ENCODE measurements at regions of chr7 and their contacts with region 1.

Region 1: GRCh38 chr7:42237162-42237821 is at the start of gene GLI3:
- DNase-seq: peak; percentile 88
- ATAC-seq: peak; percentile 72
- H3K4me3 ChIP-seq: peak within 1 kb of the TSS; percentile 92
- H3K27ac ChIP-seq: peak within 1 kb of the TSS; percentile 65
- H3K4me1 ChIP-seq: peaks cover 39% of the 10 kb centered on the region
- H3K27me3 ChIP-seq: no peaks in the 10 kb centered on the region
- CTCF ChIP-seq: no peak
- total RNA-seq, gene GLI3: 3.5 and 9.6 TPM in 2 replicates

Region 2: GRCh38 chr7:42107484-42108245 is 129.6 kb before region 1 on chr7:
- CTCF ChIA-PET with region 1: no interaction called
- POLR2A ChIA-PET with region 1: no interaction called
- intact Hi-C with region 1: loop called (anchors 2 kb)
- DNase-seq: peak; percentile 88
- ATAC-seq: peak; percentile 49
- H3K4me3 ChIP-seq: peak overlapping the region; percentile 45
- H3K27ac ChIP-seq: peak overlapping the region; percentile 94
- H3K4me1 ChIP-seq: peaks cover 57% of the 10 kb centered on the region
- H3K27me3 ChIP-seq: no peaks in the 10 kb centered on the region
- CTCF ChIP-seq: no peak

Region 3: GRCh38 chr7:42283553-42283952 is 46.3 kb after region 1 on chr7:
- CTCF ChIA-PET with region 1: no interaction called
- POLR2A ChIA-PET with region 1: interaction called, 5 read pairs
- intact Hi-C with region 1: loop called (anchors 2 kb)
- DNase-seq: peak; percentile 90
- ATAC-seq: peak; percentile 85
- H3K4me3 ChIP-seq: no peak overlapping the region
- H3K27ac ChIP-seq: peak overlapping the region; percentile 61
- H3K4me1 ChIP-seq: peaks cover 35% of the 10 kb centered on the region
- H3K27me3 ChIP-seq: no peaks in the 10 kb centered on the region
- CTCF ChIP-seq: no peak

Region 4: DNA sequence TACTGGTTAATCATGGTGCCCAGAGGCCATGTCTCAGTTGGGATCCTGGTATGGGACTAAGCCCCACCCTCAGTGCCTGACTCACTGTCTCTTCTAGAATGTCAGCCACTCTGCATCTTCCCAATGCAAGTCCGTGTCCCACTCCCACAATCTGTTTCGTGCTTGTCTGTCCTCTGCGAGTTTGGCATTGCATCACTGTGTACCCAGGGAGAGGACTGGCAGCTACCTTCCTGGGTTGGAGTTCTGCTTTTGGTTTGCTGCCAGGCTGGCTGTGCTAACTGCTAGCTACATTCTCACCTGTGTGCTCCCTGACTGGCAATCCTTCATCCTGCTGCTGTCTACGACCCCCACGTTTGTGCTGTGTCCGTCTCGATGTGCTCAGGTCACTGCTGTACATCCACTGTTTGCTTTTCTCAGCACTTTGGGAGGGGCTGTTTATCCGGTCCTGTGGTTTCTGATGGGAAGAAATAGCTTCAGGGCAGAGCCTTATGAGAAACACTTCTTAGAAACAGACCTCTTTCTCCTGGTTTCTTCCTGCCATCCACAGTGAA is 55.8 kb after region 1 on chr7:
- CTCF ChIA-PET with region 1: no interaction called
- POLR2A ChIA-PET with region 1: no interaction called
- intact Hi-C with region 1: loop called (anchors 2 kb)
- DNase-seq: peak; percentile 89
- ATAC-seq: peak; percentile 94
- H3K4me3 ChIP-seq: peak overlapping the region; percentile 59
- H3K27ac ChIP-seq: peak overlapping the region; percentile 94
- H3K4me1 ChIP-seq: peaks cover 21% of the 10 kb centered on the region
- H3K27me3 ChIP-seq: no peaks in the 10 kb centered on the region
- CTCF ChIP-seq: no peak

Region 5: DNA sequence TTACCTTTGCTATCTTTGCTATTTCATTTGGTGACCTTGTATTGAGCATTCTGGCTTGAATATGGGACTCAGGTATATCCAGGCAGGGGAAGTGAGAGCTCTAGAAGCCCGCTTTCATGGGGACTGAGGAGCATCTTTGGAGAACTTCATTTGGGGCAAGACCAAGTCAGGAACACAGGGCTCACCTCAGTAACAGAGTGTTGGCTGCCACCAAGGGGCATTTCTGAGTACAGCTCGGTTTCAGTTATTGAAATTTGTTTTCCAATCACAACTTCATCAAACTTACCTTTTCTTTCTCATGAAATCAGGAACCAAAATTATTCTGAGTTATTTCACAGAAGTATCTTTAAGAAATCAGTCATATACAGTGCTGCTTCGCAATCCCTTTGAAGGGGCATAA is 337.4 kb after region 1 on chr7:
- CTCF ChIA-PET with region 1: no interaction called
- POLR2A ChIA-PET with region 1: no interaction called
- intact Hi-C with region 1: loop called (anchors 10 kb)
- DNase-seq: peak; percentile 34
- ATAC-seq: peak; percentile 80
- H3K4me3 ChIP-seq: no peak overlapping the region
- H3K27ac ChIP-seq: no peak overlapping the region
- H3K4me1 ChIP-seq: peaks cover 9% of the 10 kb centered on the region
- H3K27me3 ChIP-seq: no peaks in the 10 kb centered on the region
- CTCF ChIP-seq: peak; percentile 67

Measured in PC-3 (cell line).